Uterus (tissue), 4 donors: ENCODE measurements at regions of chr2 and their contacts with region 1.

Region 1: GRCh38 chr2:191811807-191812602 is 34.9 kb downstream of the CAVIN2 start:
- DNase-seq: peak; percentile 60 to 66
- H3K4me3 ChIP-seq: no peak overlapping the region
- H3K27ac ChIP-seq: no peak overlapping the region
- H3K4me1 ChIP-seq: no peaks in the 10 kb centered on the region
- H3K27me3 ChIP-seq: no peaks in the 10 kb centered on the region
- CTCF ChIP-seq: peak; percentile 72 to 85 (median 82)
- POLR2A ChIP-seq: no peak

Region 2: DNA sequence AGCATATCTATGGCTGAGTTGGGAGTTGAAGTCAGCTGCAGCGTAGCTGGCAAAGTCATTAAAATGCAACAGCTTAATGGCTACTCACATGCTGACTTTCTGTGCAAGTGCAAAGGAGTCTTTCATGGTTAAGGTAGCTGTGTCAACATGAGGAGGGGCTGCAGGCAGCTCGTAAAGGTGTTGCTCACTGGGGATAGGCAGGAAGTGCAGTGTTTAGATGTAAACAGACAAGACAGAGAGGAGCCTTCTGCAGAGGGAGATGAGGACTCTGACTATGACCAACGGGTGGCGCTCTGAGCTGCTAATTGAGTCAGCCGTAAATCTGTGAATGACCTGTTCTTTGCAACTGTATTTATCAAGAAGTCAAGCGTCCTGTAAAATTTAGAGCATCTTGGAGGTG is 57.2 kb after region 1 on chr2:
- intact Hi-C with region 1: no loop called
- DNase-seq: no peak
- H3K4me3 ChIP-seq: no peak overlapping the region
- H3K27ac ChIP-seq: no peak overlapping the region
- H3K4me1 ChIP-seq: peaks cover 6 to 12% of the 10 kb centered on the region in 2 donors
- H3K27me3 ChIP-seq: no peaks in the 10 kb centered on the region
- CTCF ChIP-seq: no peak
- POLR2A ChIP-seq: no peak

Region 3: DNA sequence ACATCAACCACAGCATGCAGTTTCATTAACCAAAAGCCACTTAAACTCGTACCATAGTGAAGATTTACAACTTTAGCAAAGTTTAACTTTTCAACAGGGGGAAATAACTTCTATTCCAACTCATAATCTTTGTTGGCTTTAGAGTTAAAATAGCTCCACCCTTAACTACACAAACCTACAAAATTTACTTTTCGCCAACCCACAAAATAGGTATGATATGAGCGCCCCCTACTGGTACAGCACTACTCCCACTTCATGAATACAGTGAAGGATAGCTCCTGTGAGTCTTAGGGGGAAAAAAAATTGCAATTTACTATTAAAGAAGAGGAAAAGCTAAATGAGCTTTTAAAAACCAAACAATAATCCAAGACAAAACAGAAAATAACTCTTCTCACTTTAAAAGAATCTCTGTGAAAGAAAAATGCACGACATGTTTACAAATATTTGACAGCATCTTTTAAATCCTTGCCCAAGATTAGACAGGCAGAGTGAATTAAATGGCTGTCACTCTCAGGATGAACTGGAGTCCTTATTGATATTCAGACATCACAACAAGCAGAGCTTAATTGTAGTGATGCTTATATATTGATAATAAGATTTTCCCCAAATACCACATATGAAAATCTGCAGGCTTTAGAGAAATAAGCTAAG is 350.5 kb after region 1 on chr2:
- intact Hi-C with region 1: loop called (anchors 5 kb)
- DNase-seq: peak; percentile 46 to 70
- H3K4me3 ChIP-seq: no peak overlapping the region
- H3K27ac ChIP-seq: no peak overlapping the region
- H3K4me1 ChIP-seq: no peaks in the 10 kb centered on the region
- H3K27me3 ChIP-seq: no peaks in the 10 kb centered on the region
- CTCF ChIP-seq: peak; percentile 89 to 96 (median 91)
- POLR2A ChIP-seq: no peak

Region 4: GRCh38 chr2:192377173-192377572 is 565.2 kb after region 1 on chr2:
- intact Hi-C with region 1: no loop called
- DNase-seq: no peak
- H3K4me3 ChIP-seq: no peak overlapping the region
- H3K27ac ChIP-seq: no peak overlapping the region
- H3K4me1 ChIP-seq: no peaks in the 10 kb centered on the region
- H3K27me3 ChIP-seq: no peaks in the 10 kb centered on the region
- CTCF ChIP-seq: no peak
- POLR2A ChIP-seq: no peak